GM18951 (cell line): ENCODE measurements at regions of chr5 and their contacts with region 1.

Region 1: DNA sequence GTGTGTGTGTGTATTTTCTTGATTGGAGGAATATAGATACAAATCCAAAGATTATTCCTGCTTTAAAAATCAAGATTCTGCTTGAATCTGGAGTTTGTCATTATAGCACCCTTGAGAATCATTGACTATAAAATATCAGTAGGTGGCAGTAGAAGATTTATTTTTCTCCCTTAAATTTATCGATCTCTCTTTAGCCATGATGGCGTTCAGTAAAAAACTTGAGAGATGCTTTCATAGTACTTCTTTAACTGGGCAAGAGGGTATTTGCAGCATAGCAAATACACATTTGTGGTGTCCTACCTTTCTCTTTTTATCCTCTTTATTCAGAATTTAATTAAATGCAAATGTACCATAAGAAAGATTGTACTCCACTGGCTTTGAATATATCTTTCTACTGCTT is 307.7 kb downstream of the ADGRV1 start:
- POLR2A ChIP-seq: no peak

Region 2: GRCh38 chr5:91419571-91420537 is 553.5 kb after region 1 on chr5:
- in situ Hi-C with region 1: loop called (anchors 10 kb)
- POLR2A ChIP-seq: no peak

Region 3: DNA sequence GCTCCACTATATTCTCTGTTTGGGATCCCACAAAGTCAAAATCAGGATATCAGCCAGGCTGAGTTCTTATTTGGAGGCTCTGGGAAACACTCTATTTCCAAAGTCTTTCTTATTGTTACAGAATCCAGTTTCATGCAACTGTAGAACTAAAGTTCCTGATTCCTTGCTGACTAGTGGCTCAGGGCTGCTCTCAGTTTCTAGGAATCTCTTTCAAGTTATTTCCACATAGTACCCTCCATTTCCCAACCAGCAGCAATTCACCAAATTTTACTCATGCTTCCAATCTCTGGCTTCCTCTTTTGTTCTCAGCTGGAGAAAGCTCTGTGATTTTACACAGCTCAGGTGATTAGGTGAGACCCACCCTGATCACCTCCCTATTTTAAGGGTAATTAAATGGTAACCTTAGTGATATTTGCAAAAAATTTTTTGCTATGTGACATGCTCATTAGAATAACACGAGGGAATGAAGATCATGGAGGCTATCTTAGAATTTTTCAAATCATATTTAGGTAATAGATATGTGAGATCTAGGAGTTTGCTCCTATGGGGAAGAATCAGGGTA is 1311.7 kb after region 1 on chr5:
- in situ Hi-C with region 1: no loop called
- POLR2A ChIP-seq: no peak